GM10248 (cell line): ENCODE measurements at regions of chr16 and their contacts with region 1.

Region 1: DNA sequence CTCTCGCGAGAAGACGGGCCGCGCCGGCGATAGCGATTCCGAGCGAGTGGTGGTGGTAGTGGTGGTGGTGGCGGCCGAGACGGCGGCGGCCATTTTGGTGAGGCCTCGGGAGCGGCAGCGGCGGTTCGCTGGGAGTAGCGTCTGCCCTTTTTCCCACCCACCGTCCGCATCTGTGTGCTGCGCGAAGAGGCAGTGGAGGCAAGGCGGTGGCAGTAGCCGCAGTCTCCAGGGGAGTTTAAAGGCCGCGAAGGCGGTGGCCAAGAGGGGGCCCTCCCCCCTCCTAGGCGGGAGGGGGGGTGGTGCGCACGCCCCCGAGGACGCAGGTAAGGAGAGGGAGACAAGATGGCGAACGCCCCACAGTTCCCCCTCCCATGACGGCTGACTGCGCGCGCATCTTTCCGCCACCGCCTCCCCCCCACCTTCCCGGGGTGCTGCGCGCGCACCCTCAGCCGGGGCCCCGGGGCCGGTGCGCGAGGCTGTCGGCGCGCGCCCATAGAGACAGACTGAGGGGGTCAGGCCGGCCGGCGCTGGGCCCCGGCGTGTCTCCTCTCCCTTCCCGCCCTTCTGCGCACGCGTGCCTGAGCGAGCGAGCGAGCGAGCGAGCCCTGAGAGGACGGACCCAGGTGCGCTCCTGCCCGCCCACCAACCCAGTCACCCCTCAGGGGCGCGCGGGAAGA is 694 bp upstream of the SRCAP start:
- DNase-seq: peak; percentile 98
- CTCF ChIP-seq: no peak

Region 2: GRCh38 chr16:30657866-30658730 is 40.2 kb before region 1 on chr16 and contains the start of gene FBRS:
- CTCF ChIA-PET with region 1: interaction called, 64 read pairs
- POLR2A ChIA-PET with region 1: interaction called, 7 read pairs
- DNase-seq: peak; percentile 96
- CTCF ChIP-seq: peak; percentile 89

Region 3: DNA sequence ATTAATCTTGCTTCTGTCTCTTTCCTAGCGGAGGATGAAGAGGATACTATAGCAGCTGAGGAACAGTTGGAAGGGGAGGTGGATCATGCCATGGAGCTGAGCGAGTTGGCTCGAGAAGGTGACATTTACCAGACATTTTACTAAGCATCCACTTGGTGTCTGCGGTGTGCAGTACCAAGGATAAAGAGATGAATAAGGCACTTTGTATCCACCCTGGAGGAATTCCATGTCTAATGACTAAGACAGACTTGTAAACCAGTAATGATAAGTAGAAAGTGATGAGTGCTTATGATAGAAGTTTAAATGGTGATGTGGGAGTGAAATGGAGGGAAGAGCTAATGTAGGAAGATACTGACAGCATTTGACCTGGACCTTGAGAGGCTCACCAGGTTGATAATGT is 12.7 kb after region 1 on chr16:
- CTCF ChIA-PET with region 1: interaction called, 20 read pairs
- POLR2A ChIA-PET with region 1: interaction called, 3 read pairs
- DNase-seq: no peak
- CTCF ChIP-seq: no peak